Activated CD4-positive, alpha-beta T cell treated with anti-CD3 and anti-CD28 coated beads for 36 hours (primary cell): ENCODE measurements at regions of chr2 and their contacts with region 1.

Region 1: DNA sequence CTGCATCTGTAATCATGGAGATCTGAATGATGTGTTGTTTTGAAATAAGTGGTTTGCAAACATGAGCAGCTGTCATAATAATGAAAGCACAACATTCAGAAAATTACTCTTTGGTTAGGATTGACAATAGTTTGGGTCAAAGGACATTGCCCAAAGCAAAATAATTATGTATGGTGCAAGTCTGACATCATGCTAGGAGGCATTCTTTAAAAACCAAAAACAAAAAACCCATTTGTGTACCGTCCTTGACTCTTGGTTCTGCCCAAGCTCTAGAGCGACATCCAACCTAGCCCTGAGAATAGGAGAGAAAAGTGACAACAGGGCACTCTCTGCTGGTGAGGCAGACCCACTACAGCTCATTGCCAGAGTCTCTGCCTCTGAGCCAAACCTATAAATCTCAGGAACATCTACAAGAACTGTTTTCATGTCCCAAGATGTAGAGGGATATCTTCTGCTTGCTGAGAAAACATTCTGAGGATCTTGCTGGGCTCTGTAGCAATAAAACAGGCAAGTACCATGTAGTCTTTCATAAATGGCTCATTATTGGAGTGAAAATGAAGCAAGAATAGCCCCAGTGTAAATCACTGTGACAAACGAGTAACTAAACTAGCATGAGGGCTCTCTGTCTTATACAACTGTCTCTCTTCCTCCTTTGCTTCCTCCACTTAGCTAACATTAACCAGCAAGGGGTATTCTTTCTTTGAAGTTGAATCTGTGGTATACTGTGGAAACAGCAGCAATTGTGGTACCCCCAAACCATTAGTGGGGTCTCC is 266.8 kb upstream of the CXCR4 start:
- DNase-seq: peak; percentile 68
- ATAC-seq: peak; percentile 40
- H3K4me3 Mint-ChIP-seq: no peak overlapping the region
- H3K27ac Mint-ChIP-seq: peak overlapping the region; percentile 67
- H3K4me1 Mint-ChIP-seq: peaks cover 42% of the 10 kb centered on the region
- H3K27me3 Mint-ChIP-seq: no peaks in the 10 kb centered on the region

Region 2: DNA sequence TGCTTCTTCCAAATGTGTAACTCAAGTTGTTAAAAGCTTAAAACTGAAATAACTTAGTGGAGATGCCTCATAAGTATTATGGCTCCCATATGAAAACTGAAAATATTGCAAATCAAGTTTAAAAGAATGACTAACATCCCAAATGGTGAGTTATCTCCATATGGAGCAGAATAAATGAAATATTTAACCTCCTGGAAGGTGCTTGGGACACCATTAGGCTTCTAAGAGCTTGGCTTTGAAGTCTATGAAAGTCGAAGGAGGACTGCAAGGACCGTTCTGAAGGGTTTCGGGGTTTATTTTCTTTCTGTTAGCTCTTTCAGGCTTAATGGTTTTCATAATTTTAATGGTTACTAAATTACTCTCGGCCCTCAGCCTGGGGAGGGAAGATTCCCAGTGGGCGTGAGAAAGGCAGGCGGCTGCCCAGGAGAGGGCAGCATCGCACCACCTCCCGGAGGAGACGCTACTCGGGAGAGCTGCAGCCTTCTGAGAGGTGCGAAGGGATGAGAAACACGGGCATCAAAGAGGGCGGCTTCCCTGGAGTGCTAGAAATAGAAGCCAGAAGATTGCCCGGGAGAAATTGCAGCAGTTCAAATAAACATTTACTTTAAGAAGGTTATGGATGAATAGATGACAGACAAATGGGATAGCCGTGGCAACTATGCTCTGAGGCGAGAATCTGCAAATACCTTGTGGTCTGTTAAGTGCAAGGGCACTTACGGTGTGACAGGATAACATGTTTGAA is 1380.5 kb before region 1 on chr2:
- CTCF ChIA-PET with region 1: no interaction called
- POLR2A ChIA-PET with region 1: no interaction called
- intact Hi-C with region 1: loop called in 1 of 2 experiments (anchors 1 kb)
- DNase-seq: peak; percentile 85
- ATAC-seq: peak; percentile 96
- H3K4me3 Mint-ChIP-seq: no peak overlapping the region
- H3K27ac Mint-ChIP-seq: no peak overlapping the region
- H3K4me1 Mint-ChIP-seq: peaks cover 4% of the 10 kb centered on the region
- H3K27me3 Mint-ChIP-seq: peaks cover 11% of the 10 kb centered on the region

Region 3: GRCh38 chr2:135741395-135742324 is 643.1 kb before region 1 on chr2 and contains the start of gene UBXN4:
- CTCF ChIA-PET with region 1: no interaction called
- POLR2A ChIA-PET with region 1: no interaction called
- intact Hi-C with region 1: loop called (anchors 2 to 5 kb)
- DNase-seq: peak; percentile 98
- ATAC-seq: peak; percentile 93
- H3K4me3 Mint-ChIP-seq: peak within 1 kb of the TSS; percentile 97
- H3K27ac Mint-ChIP-seq: peak within 1 kb of the TSS; percentile 99
- H3K4me1 Mint-ChIP-seq: peaks cover 35% of the 10 kb centered on the region
- H3K27me3 Mint-ChIP-seq: no peaks in the 10 kb centered on the region
- total RNA-seq, gene UBXN4: 97.0 to 104 TPM

Region 4: GRCh38 chr2:135913727-135914365 is 470.9 kb before region 1 on chr2:
- CTCF ChIA-PET with region 1: interaction called, 80 read pairs
- POLR2A ChIA-PET with region 1: no interaction called
- intact Hi-C with region 1: loop called (anchors 1 kb)
- DNase-seq: peak; percentile 53
- ATAC-seq: peak; percentile 58
- H3K4me3 Mint-ChIP-seq: no peak overlapping the region
- H3K27ac Mint-ChIP-seq: no peak overlapping the region
- H3K4me1 Mint-ChIP-seq: peaks cover 7% of the 10 kb centered on the region
- H3K27me3 Mint-ChIP-seq: no peaks in the 10 kb centered on the region

Region 5: GRCh38 chr2:136059036-136059472 is 325.7 kb before region 1 on chr2:
- CTCF ChIA-PET with region 1: interaction called, 13 read pairs
- POLR2A ChIA-PET with region 1: interaction called, 6 read pairs
- intact Hi-C with region 1: loop called (anchors 1 to 2 kb)
- DNase-seq: no peak
- ATAC-seq: no peak
- H3K4me3 Mint-ChIP-seq: no peak overlapping the region
- H3K27ac Mint-ChIP-seq: no peak overlapping the region
- H3K4me1 Mint-ChIP-seq: peaks cover 49% of the 10 kb centered on the region
- H3K27me3 Mint-ChIP-seq: no peaks in the 10 kb centered on the region

Region 6: GRCh38 chr2:136212423-136213378 is 172.0 kb before region 1 on chr2:
- CTCF ChIA-PET with region 1: no interaction called
- POLR2A ChIA-PET with region 1: interaction called, 3 read pairs
- intact Hi-C with region 1: loop called (anchors 2 kb)
- DNase-seq: peak; percentile 51
- ATAC-seq: peak; percentile 95
- H3K4me3 Mint-ChIP-seq: no peak overlapping the region
- H3K27ac Mint-ChIP-seq: peak overlapping the region; percentile 72
- H3K4me1 Mint-ChIP-seq: peaks cover 42% of the 10 kb centered on the region
- H3K27me3 Mint-ChIP-seq: no peaks in the 10 kb centered on the region

Region 7: GRCh38 chr2:136327162-136327852 is 57.4 kb before region 1 on chr2:
- CTCF ChIA-PET with region 1: interaction called, 11 read pairs
- POLR2A ChIA-PET with region 1: interaction called, 21 read pairs
- intact Hi-C with region 1: loop called (anchors 1 to 2 kb)
- DNase-seq: peak; percentile 88
- ATAC-seq: peak; percentile 95
- H3K4me3 Mint-ChIP-seq: peak overlapping the region; percentile 56
- H3K27ac Mint-ChIP-seq: peak overlapping the region; percentile 92
- H3K4me1 Mint-ChIP-seq: peaks cover 69% of the 10 kb centered on the region
- H3K27me3 Mint-ChIP-seq: no peaks in the 10 kb centered on the region